ENCODE measurements at regions of chr9 and their contacts with region 1.

Region 1: DNA sequence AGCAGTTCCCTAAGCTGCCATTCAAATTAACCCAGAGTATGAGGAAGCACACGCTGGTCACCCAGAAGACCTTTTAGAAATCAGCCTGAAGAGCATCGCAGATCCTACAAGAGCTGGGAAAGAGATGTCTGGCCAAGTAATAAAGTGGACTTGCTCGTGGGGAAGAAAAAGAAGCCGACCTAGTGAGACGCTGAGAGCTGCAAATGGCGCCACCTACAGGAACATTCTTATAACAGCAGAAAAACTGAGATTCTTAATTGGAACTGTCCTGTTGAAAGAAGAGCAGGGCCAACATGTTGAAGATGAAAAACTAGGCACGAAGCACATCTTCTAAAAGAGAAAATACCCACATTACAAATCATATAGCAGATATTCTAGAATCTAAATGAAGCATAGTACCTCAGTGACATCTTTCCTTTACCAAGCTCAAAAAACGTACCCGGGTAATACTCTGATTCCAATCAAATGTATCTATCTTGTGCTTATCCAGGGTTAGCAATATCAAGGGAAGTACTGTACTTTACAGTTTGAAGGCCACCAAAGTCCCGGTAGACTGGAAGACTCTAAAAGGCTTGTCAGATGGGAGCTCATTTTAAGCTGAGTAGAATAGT is 3.9 kb upstream of the GNAQ start:
- DNase-seq: peak in 8 of 9 experiments; percentile 6 to 83 (median 54)
- ATAC-seq: peak; percentile 12
- H3K4me3 ChIP-seq: no peak overlapping the region
- H3K4me3 Mint-ChIP-seq: no peak overlapping the region
- H3K27ac ChIP-seq: no peak overlapping the region
- H3K27ac Mint-ChIP-seq: no peak overlapping the region
- H3K4me1 ChIP-seq: peaks cover 23% of the 10 kb centered on the region
- H3K4me1 Mint-ChIP-seq: peaks cover 31% of the 10 kb centered on the region
- H3K27me3 ChIP-seq: no peaks in the 10 kb centered on the region
- H3K27me3 Mint-ChIP-seq: peaks cover 2% of the 10 kb centered on the region
- CTCF ChIP-seq: peak; percentile 88

Region 2: GRCh38 chr9:77663754-77664153 is 371.7 kb before region 1 on chr9:
- CTCF ChIA-PET with region 1: no interaction called
- POLR2A ChIA-PET with region 1: no interaction called
- intact Hi-C with region 1: loop called in 1 of 2 experiments (anchors 10 kb)
- DNase-seq: no peak
- ATAC-seq: no peak
- H3K4me3 ChIP-seq: no peak overlapping the region
- H3K4me3 Mint-ChIP-seq: no peak overlapping the region
- H3K27ac ChIP-seq: no peak overlapping the region
- H3K27ac Mint-ChIP-seq: no peak overlapping the region
- H3K4me1 ChIP-seq: no peaks in the 10 kb centered on the region
- H3K4me1 Mint-ChIP-seq: no peaks in the 10 kb centered on the region
- H3K27me3 ChIP-seq: no peaks in the 10 kb centered on the region
- H3K27me3 Mint-ChIP-seq: peaks cover 2% of the 10 kb centered on the region
- CTCF ChIP-seq: no peak

Region 3: GRCh38 chr9:77764894-77765780 is 270.4 kb before region 1 on chr9:
- CTCF ChIA-PET with region 1: no interaction called
- POLR2A ChIA-PET with region 1: no interaction called
- intact Hi-C with region 1: no loop called
- DNase-seq: no peak
- ATAC-seq: no peak
- H3K4me3 ChIP-seq: no peak overlapping the region
- H3K4me3 Mint-ChIP-seq: no peak overlapping the region
- H3K27ac ChIP-seq: no peak overlapping the region
- H3K27ac Mint-ChIP-seq: no peak overlapping the region
- H3K4me1 ChIP-seq: no peaks in the 10 kb centered on the region
- H3K4me1 Mint-ChIP-seq: no peaks in the 10 kb centered on the region
- H3K27me3 ChIP-seq: no peaks in the 10 kb centered on the region
- H3K27me3 Mint-ChIP-seq: no peaks in the 10 kb centered on the region
- CTCF ChIP-seq: no peak

Region 4: GRCh38 chr9:77909306-77909705 is 126.2 kb before region 1 on chr9:
- CTCF ChIA-PET with region 1: interaction called, 3 read pairs
- POLR2A ChIA-PET with region 1: no interaction called
- intact Hi-C with region 1: loop called in 1 of 2 experiments (anchors 5 kb)
- DNase-seq: peak in 4 of 9 experiments; percentile 4 to 59 (median 22)
- ATAC-seq: peak; percentile 99
- H3K4me3 ChIP-seq: peak overlapping the region in 1 of 2 experiments; percentile 10
- H3K4me3 Mint-ChIP-seq: peak overlapping the region; percentile 74
- H3K27ac ChIP-seq: peak overlapping the region; percentile 26
- H3K27ac Mint-ChIP-seq: peak overlapping the region; percentile 92
- H3K4me1 ChIP-seq: peaks cover 36% of the 10 kb centered on the region
- H3K4me1 Mint-ChIP-seq: peaks cover 52% of the 10 kb centered on the region
- H3K27me3 ChIP-seq: no peaks in the 10 kb centered on the region
- H3K27me3 Mint-ChIP-seq: no peaks in the 10 kb centered on the region
- CTCF ChIP-seq: no peak

Region 5: DNA sequence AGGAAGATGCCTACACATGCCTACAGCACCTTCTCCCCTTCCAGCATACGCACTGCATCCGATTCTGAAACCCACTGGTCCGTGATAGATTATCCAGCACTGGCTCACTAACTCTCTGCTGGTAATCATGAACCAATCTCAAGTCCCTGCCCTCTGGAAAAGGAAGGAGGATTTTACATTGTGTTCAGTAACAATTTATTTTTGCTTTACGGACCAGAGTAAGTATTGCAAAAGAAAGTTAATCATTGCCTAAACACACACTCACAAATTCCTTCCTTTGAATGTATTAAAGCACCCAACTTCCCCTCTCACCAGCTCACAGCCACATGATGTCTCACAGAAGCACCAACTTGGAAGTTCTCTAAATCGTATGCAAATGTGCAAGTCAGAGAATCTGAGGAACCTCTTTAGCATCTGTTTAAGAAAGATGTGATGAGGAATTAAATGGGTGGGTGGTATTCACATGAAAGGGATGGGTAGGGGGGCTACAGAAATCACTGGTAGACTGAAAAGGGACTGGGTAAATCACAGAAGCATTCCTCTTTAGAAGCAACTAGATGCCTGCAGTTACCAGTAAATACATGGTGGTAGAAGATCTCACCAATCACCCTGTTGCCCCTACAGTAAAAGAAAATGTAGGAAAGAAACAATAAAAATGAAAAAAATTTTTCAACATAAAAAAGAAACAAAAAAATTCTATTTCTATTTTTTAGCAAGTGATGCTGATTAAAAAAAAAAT is 12.3 kb before region 1 on chr9:
- CTCF ChIA-PET with region 1: interaction called, 23 read pairs
- POLR2A ChIA-PET with region 1: interaction called, 4 read pairs
- intact Hi-C with region 1: no loop called
- DNase-seq: peak in 1 of 9 experiments; percentile 33
- ATAC-seq: no peak
- H3K4me3 ChIP-seq: no peak overlapping the region
- H3K4me3 Mint-ChIP-seq: no peak overlapping the region
- H3K27ac ChIP-seq: no peak overlapping the region
- H3K27ac Mint-ChIP-seq: no peak overlapping the region
- H3K4me1 ChIP-seq: peaks cover 24% of the 10 kb centered on the region
- H3K4me1 Mint-ChIP-seq: peaks cover 55% of the 10 kb centered on the region
- H3K27me3 ChIP-seq: no peaks in the 10 kb centered on the region
- H3K27me3 Mint-ChIP-seq: no peaks in the 10 kb centered on the region
- CTCF ChIP-seq: no peak

Region 6: DNA sequence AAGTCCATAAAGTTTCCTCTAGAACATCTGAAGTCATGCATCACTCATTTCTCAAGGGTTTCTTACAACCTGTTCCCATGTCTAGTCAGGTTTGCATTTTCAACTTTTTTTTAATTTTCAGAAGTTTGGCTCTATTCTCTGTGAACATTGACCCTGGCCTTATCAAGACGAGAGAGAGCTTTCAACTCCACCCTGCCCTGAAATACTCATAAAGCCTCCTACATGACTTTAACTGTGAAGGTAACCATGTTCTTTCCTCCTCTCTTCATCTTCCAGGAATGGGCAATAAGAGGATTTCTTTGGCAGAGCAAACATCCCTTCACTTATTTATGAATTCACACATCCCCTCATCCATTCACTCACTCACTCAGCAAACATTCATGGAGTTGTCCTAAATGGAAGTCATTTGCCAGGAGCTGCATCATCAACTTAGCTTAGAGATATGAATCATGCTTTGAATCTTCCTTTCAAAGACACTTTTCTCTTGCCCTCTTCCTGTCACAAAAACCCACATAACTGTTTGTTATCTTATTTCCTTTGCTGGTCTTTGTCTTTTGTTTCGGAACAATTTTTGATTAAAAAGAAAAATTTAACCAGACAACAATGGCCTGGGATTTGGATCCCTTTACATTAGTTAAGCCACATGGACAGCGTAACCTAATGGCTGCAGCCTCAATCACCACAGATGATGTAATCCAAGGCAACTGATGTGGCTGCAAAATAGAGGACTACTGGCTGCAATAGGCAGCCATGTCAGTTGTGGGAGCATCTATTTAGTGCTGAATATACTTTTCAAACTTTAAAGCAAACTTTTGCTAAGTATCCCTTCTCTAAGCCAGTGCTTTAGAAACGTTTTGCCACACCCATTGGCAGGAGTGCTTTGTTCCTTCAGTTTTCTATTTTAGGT is 39.1 kb after region 1 on chr9:
- CTCF ChIA-PET with region 1: interaction called, 12 read pairs
- POLR2A ChIA-PET with region 1: interaction called, 4 read pairs
- intact Hi-C with region 1: no loop called
- DNase-seq: peak in 2 of 9 experiments; percentile 39 to 57
- ATAC-seq: peak; percentile 36
- H3K4me3 ChIP-seq: peak overlapping the region in 1 of 2 experiments; percentile 7
- H3K4me3 Mint-ChIP-seq: peak overlapping the region; percentile 66
- H3K27ac ChIP-seq: peak overlapping the region; percentile 1 to 44
- H3K27ac Mint-ChIP-seq: peak overlapping the region; percentile 76
- H3K4me1 ChIP-seq: peaks cover 36% of the 10 kb centered on the region
- H3K4me1 Mint-ChIP-seq: peaks cover 49% of the 10 kb centered on the region
- H3K27me3 ChIP-seq: no peaks in the 10 kb centered on the region
- H3K27me3 Mint-ChIP-seq: no peaks in the 10 kb centered on the region
- CTCF ChIP-seq: no peak

Region 7: GRCh38 chr9:78235756-78236538 is 200.5 kb after region 1 on chr9 and contains the start of gene CEP78:
- CTCF ChIA-PET with region 1: interaction called, 3 read pairs
- POLR2A ChIA-PET with region 1: no interaction called
- intact Hi-C with region 1: loop called (anchors 5 kb)
- DNase-seq: peak; percentile 71 to 95 (median 87)
- ATAC-seq: peak; percentile 97
- H3K4me3 ChIP-seq: peak within 1 kb of the TSS; percentile 90 to 91
- H3K4me3 Mint-ChIP-seq: no peak within 1 kb of the TSS
- H3K27ac ChIP-seq: peak within 1 kb of the TSS; percentile 83 to 87
- H3K27ac Mint-ChIP-seq: peak within 1 kb of the TSS; percentile 93
- H3K4me1 ChIP-seq: peaks cover 33% of the 10 kb centered on the region
- H3K4me1 Mint-ChIP-seq: peaks cover 36% of the 10 kb centered on the region
- H3K27me3 ChIP-seq: no peaks in the 10 kb centered on the region
- H3K27me3 Mint-ChIP-seq: no peaks in the 10 kb centered on the region
- CTCF ChIP-seq: no peak
- total RNA-seq, gene CEP78: 17.7 to 18.5 TPM